ENCODE measurements at regions of chr9 and their contacts with region 1.

Region 1: GRCh38 chr9:88874383-88874782 is 116.9 kb upstream of the S1PR3 start:
- DNase-seq: no peak
- ATAC-seq: peak; percentile 35 to 40

Region 2: GRCh38 chr9:88808019-88808653 is 66.2 kb before region 1 on chr9:
- intact Hi-C with region 1: loop called in 1 of 2 experiments (anchors 5 kb)
- DNase-seq: no peak
- ATAC-seq: no peak

Region 3: GRCh38 chr9:89036383-89036782 is 162.0 kb after region 1 on chr9:
- intact Hi-C with region 1: no loop called
- DNase-seq: no peak
- ATAC-seq: no peak

Measured in left cardiac atrium (tissue), 4 donors.